ENCODE measurements at regions of chr19 and their contacts with region 1.

Region 1: GRCh38 chr19:12806239-12807081 is at the start of gene RNASEH2A:
- DNase-seq: peak; percentile 92
- H3K4me3 Mint-ChIP-seq: peak within 1 kb of the TSS; percentile 96
- H3K27ac Mint-ChIP-seq: peak within 1 kb of the TSS; percentile 85
- H3K4me1 Mint-ChIP-seq: peaks cover 22% of the 10 kb centered on the region
- H3K27me3 Mint-ChIP-seq: no peaks in the 10 kb centered on the region
- total RNA-seq, gene RNASEH2A: 54.8 to 55.6 TPM

Region 2: DNA sequence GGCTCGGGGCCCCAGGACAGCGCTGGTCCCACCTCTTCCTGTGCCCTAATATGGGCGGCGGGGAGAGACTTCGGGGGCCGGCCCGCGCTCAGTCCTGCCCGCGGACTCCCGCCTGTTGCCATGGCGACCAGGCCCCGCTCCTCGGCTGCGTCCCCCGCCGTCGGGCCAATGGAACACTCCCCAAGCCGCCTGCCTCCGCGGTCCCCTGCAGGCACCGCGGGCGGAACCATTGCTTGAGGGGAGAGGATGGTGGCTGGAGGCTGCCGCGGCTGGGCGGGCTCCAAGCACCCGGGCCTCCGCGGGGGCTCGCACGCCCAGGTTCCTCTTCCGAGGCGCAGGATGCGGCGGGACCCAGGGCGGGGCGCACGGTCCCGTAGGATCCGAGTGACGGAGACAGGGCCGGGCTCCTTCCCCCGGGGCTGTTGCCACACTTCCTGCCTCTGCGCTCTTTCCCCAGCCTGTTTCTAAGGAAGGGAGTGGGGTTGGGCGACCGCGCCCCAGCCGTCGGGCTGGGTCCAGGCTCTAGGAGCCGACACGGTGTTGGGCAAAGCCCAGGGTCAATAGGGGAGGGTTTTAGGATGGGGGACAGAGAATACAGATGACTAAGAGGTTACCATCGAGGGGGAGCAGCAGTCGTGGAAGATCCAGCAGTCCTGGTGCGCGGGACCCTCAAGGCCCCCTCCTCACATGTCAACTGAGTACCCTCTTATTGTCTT is 16.4 kb before region 1 on chr19:
- CTCF ChIA-PET with region 1: no interaction called
- intact Hi-C with region 1: loop called (anchors 1 kb)
- DNase-seq: peak; percentile 97
- H3K4me3 Mint-ChIP-seq: peak overlapping the region; percentile 97
- H3K27ac Mint-ChIP-seq: peak overlapping the region; percentile 96
- H3K4me1 Mint-ChIP-seq: peaks cover 25% of the 10 kb centered on the region
- H3K27me3 Mint-ChIP-seq: no peaks in the 10 kb centered on the region

Region 3: DNA sequence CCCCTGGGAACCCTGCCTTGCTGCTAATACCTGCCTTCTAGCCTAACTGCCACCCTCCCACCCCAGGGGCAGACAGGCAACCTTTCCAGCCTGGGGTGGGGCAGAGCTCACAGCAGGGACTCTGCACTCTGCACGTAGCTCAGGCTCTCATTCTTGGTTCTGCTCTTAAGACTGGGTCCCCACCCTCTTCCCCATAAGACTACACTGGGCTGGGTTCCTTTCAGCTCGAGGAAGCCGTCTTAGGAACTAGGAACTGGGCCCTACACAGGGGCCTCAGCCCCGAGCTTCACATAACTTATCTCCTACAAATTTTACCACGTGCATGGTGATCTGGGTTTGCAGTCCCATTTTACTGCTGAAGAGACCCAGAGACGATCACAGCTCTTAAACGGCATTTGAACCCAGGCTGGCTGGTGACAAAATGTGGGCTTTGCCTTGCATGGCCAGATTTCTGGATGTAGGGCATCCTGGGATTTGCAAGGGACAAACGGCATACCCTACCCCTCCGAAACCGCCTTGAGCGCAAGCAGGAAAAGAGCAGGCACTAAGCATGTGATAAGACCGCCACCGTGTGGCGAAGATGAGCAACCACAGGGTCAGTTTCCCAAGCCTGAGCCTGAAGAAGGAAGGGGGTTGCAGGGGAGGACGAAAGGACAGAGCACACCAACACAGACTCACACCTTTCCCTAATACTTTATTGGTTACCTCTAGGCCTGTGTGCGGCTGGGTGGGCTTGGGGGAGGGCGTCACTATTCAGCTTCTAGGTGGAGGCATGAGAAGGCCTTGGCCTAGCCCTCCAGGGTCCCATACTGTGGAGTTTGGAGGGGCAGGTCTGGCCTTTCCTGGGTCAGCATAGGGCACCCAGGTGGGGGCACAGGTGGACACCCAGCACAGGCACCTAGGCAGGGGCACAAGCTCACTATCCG is 10.1 kb before region 1 on chr19:
- CTCF ChIA-PET with region 1: interaction called, 11 read pairs
- intact Hi-C with region 1: loop called (anchors 1 kb)
- DNase-seq: peak; percentile 84
- H3K4me3 Mint-ChIP-seq: peak overlapping the region; percentile 67
- H3K27ac Mint-ChIP-seq: peak overlapping the region; percentile 74
- H3K4me1 Mint-ChIP-seq: peaks cover 40% of the 10 kb centered on the region
- H3K27me3 Mint-ChIP-seq: no peaks in the 10 kb centered on the region

Region 4: GRCh38 chr19:12847159-12848139 is 41.0 kb after region 1 on chr19:
- CTCF ChIA-PET with region 1: interaction called, 10 read pairs
- intact Hi-C with region 1: no loop called
- DNase-seq: peak; percentile 87
- H3K4me3 Mint-ChIP-seq: peak overlapping the region; percentile 36
- H3K27ac Mint-ChIP-seq: no peak overlapping the region
- H3K4me1 Mint-ChIP-seq: peaks cover 3% of the 10 kb centered on the region
- H3K27me3 Mint-ChIP-seq: peaks cover 21% of the 10 kb centered on the region

Region 5: GRCh38 chr19:12881172-12881808 is 74.8 kb after region 1 on chr19 and contains the start of gene DNASE2:
- CTCF ChIA-PET with region 1: no interaction called
- intact Hi-C with region 1: loop called (anchors 1 kb)
- DNase-seq: peak; percentile 97
- H3K4me3 Mint-ChIP-seq: peak within 1 kb of the TSS; percentile 88
- H3K27ac Mint-ChIP-seq: peak within 1 kb of the TSS; percentile 76
- H3K4me1 Mint-ChIP-seq: peaks cover 28% of the 10 kb centered on the region
- H3K27me3 Mint-ChIP-seq: no peaks in the 10 kb centered on the region
- total RNA-seq, gene DNASE2: 30.9 to 31.6 TPM

Region 6: DNA sequence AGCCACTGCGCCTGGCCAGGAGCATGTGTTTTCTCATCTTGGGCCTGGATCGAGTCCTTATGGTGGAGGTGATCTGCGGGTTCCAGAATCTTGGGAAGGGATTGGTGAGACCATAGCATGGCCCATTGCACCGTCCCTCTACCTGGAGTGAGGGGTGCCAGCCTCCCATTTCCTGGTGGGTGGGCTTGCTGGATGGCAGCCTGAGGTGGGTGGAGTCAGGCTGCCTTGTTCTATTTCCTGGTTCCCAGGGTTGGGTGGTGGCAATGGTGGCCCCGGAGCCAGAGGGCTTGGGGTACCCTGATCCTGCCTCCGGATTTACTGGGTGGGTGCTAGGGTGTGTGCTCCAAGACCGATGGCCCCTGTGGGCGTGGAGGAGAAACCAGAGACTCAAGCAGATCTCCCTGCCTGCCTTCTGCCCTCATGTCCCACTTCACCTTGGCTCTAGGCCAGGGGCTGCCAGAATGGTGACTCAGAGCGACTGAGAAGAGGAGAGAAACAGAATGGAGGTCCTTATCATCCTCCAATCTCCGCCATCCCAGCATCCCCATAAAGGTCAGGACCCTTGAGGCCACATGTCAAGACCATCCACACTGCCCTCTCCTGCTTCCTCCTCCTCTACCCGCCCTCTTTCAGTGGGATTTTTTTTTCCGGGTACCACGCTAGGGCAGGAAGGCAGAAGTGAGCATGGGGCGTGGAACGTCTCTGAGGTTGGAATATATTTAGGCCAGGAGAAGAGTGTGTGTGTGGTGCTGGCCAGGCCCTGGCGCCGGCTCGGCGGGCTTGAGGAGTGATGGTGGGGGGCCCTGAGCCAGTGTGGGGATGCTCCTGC is 365.8 kb after region 1 on chr19:
- CTCF ChIA-PET with region 1: no interaction called
- intact Hi-C with region 1: no loop called
- DNase-seq: peak; percentile 93
- H3K4me3 Mint-ChIP-seq: peak overlapping the region; percentile 90
- H3K27ac Mint-ChIP-seq: peak overlapping the region; percentile 99
- H3K4me1 Mint-ChIP-seq: peaks cover 61% of the 10 kb centered on the region
- H3K27me3 Mint-ChIP-seq: no peaks in the 10 kb centered on the region

Measured in activated naive CD4-positive, alpha-beta T cell treated with anti-CD3 and anti-CD28 coated beads for 36 hours (primary cell).